ENCODE measurements at regions of chr4 and their contacts with region 1.

Region 1: DNA sequence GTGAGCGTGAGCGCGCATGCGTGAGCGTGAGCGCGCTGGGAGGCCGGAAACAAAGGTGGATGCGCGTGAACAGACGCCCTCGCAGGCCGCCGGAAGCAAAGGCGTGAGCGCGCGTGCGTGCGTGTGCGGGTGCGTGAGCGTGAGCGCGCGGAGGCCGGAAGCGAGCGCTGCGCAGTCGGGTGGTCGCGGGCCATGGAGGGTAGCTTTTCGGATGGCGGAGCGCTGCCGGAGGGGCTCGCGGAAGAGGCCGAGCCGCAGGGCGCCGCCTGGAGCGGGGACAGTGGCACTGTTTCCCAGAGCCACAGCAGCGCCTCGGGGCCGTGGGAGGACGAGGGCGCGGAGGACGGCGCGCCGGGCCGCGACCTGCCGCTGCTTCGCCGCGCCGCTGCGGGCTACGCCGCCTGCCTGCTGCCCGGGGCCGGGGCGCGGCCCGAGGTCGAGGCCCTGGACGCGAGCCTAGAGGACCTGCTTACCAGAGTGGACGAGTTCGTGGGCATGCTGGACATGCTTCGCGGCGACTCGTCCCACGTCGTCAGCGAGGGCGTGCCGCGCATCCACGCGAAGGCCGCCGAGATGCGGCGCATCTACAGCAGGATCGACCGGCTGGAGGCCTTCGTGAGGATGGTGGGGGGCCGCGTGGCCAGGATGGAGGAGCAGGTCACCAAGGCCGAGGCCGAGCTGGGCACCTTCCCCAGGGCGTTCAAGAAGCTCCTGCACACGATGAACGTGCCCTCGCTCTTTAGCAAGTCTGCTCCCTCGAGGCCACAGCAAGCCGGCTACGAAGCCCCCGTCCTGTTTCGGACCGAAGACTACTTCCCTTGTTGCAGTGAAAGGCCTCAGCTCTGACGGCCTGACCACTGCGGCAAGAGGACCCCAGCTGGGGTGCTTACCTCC is at the start of gene BLOC1S4:
- DNase-seq: peak; percentile 70 to 86
- H3K4me3 ChIP-seq: peak within 1 kb of the TSS; percentile 84 to 96 (median 88)
- H3K27ac ChIP-seq: peak within 1 kb of the TSS; percentile 68; the same call in 1 of the 2 replicates
- H3K4me1 ChIP-seq: peaks cover 0 to 4% (median 0%) of the 10 kb centered on the region in 4 experiments; a peak in 2 of 7 replicates
- H3K27me3 ChIP-seq: no peaks in the 10 kb centered on the region; a peak in 3 of 7 replicates
- CTCF ChIP-seq: no peak
- EP300 ChIP-seq: no peak
- POLR2A ChIP-seq: peak in 1 of 2 experiments; percentile 78; a peak in 2 of 3 replicates
- RAD21 ChIP-seq: no peak
- total RNA-seq, gene BLOC1S4: 19.1 and 20.5 TPM in 2 replicates

Region 2: DNA sequence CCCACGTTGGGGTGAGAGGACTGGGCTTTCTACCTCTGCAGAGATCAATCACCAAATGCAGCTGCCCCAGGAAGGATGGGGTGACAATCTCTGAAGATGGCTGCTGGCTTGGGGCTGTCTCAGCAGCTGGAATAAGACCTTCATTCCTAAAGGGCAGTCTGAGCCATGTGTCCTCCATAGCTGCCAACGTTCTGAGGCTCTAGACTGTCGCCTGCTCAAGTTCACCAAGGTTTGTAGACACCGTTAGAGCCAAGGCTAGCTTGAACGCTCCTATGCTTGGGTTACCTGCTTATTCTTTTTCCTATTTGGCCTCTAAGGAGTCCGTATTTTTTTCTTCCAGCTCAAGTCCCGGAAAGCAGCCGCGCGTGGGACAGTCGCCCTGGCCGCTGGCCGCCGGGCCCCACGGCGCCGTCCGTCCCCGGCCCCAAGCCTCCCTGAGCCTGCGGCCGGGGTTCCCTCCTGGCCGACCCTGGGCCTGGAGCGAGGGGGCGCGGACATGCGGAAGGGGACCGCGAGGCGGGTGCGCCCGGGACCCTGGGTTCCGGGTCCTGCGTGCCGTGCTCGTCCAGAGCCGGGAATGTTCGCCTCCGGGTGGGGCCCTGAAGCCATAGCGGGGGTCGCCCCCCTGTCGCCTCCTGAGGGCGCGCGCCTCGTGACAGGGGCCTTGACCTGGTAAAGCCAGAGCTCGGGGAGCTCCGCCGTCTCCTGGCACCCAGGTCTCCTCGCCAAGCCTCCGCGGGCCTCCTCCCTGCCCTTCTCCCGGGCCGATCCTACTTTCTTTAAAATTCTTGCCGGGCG is 52.5 kb before region 1 on chr4:
- CTCF ChIA-PET with region 1: no interaction called
- POLR2A ChIA-PET with region 1: no interaction called
- DNase-seq: no peak
- H3K4me3 ChIP-seq: 0 out of 8 replicates have a peak overlapping the region, but pooled peaks of 1 of the 4 experiments have one; percentile 6
- H3K27ac ChIP-seq: no peak overlapping the region
- H3K4me1 ChIP-seq: no peaks in the 10 kb centered on the region; a peak in 1 of 7 replicates
- H3K27me3 ChIP-seq: peaks cover 0 to 15% (median 11%) of the 10 kb centered on the region in 4 experiments; a peak in 5 of 7 replicates
- CTCF ChIP-seq: no peak
- EP300 ChIP-seq: no peak
- POLR2A ChIP-seq: no peak
- RAD21 ChIP-seq: no peak

Region 3: GRCh38 chr4:6732441-6733357 is 16.4 kb after region 1 on chr4:
- CTCF ChIA-PET with region 1: interaction called, 20 read pairs
- POLR2A ChIA-PET with region 1: no interaction called
- DNase-seq: no peak
- H3K4me3 ChIP-seq: no peak overlapping the region
- H3K27ac ChIP-seq: no peak overlapping the region
- H3K4me1 ChIP-seq: peaks cover 0 to 9% (median 3%) of the 10 kb centered on the region in 4 experiments; a peak in 4 of 7 replicates
- H3K27me3 ChIP-seq: no peaks in the 10 kb centered on the region
- CTCF ChIP-seq: no peak
- EP300 ChIP-seq: no peak
- POLR2A ChIP-seq: no peak
- RAD21 ChIP-seq: no peak

Region 4: DNA sequence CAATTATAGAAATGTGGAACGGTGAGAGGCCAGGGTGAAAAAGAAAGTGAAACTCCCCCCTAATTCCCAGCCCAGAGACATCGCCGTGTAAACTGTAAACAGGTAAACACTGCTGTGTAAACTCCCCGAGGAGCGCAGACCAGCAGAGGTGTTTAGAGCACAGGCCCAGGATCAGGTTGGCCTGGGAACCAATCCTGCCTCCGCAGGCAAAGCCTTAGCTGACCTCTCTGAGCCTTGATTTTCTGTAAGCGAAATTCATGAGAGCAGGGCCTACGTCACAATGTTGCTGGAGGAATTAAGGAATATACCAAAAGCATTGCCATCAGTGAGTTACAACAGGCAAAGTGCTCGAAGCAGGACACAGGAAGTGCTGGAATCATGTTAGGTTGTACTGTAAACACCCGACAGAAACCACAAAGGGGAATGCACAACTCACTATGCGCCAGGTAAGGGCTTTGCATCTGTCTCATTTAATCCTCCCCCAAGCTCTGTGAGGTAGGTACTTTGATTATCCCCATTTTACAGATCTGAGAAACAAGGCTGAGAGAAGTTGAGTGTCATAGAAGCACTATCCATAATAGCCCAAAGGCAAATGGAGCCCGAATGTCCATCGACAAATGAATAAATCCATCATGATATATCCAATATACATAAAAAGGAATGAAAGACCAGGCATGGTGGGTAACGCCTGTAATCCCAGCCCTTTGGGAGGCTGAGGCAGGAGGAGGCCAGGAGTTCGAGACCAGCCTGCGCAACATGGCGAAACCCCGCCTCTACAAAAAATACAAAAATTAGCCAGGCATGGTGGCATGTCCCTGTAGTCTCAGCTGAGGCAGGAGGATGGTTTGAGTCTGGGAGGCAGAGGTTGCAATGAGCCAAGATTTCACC is 35.6 kb after region 1 on chr4:
- CTCF ChIA-PET with region 1: no interaction called
- POLR2A ChIA-PET with region 1: no interaction called
- DNase-seq: no peak
- H3K4me3 ChIP-seq: no peak overlapping the region
- H3K27ac ChIP-seq: no peak overlapping the region
- H3K4me1 ChIP-seq: peaks cover 0 to 6% (median 0%) of the 10 kb centered on the region in 4 experiments; a peak in 2 of 7 replicates
- H3K27me3 ChIP-seq: no peaks in the 10 kb centered on the region
- CTCF ChIP-seq: no peak
- EP300 ChIP-seq: no peak
- POLR2A ChIP-seq: no peak
- RAD21 ChIP-seq: no peak

Region 5: DNA sequence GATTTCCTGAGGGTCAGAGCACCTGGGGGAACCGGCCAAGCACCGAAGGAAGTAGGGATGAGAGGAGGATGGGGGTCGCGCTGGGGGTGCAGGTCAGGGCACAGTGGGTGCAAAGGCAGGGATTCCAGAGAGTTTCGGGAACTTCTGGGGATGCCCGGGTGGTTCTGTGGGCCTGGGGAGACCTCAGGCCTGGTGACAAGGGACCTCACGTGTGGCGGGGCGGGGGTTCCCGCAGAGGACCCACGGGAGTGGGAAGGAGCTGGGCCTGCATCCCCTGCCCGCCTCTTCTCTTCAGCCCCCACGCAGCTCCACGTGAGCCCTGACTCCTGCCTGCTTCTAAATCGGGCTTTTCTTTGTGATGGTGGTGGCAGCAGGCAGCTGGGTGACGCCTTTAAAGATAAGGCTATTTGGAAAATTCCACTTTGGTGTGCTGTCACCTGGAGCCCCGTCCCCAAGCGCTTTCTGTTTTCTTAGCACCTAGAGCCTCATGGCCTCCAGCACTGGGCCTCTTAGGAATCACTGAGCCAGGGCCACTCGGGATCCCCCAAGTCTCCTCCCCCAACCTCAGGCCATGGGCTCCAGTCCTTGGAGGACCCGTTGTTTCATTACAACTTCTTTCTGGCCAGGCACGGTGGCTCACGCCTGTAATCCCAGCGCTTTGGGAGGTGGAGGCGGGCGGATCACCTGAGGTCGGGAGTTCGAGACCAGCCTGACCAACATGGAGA is 186.2 kb after region 1 on chr4:
- CTCF ChIA-PET with region 1: no interaction called
- POLR2A ChIA-PET with region 1: no interaction called
- DNase-seq: no peak
- H3K4me3 ChIP-seq: no peak overlapping the region
- H3K27ac ChIP-seq: no peak overlapping the region
- H3K4me1 ChIP-seq: peaks cover 0 to 2% (median under 1%) of the 10 kb centered on the region in 4 experiments; a peak in 3 of 7 replicates
- H3K27me3 ChIP-seq: peaks cover 0 to 3% (median 0%) of the 10 kb centered on the region in 4 experiments; a peak in 1 of 7 replicates
- CTCF ChIP-seq: no peak
- EP300 ChIP-seq: no peak
- POLR2A ChIP-seq: no peak
- RAD21 ChIP-seq: no peak

Measured in H1 (cell line).